ENCODE measurements at regions of chr1 and their contacts with region 1.

Region 1: DNA sequence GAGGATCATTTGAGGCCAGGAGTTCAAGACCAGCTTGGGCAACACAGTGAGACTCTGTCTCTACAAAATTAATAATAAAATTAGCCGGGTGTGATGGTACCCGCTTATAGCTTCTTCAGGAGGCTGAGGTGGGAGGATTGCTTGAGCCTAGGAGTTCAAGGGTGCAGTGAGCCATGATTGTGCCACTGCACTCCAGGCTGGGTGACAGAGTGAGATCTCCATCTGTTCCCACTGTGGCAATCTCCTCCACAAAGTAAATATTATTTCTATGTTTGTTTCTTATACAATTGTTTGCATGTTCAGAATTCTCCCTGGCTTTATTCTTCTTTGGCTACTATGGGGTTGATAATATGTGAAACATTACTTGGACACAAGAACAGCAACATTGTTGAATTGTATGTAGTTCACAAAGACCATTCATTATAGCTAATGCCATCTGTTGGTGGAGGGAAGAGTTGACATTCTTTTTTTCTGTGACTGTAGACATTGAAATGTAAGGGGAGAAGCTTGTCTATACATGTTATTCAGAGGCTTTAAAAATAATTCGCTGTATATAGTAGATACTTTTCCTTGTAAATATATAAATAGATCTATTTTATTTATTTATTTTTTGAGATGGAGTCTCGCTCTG is 47.8 kb upstream of the SRSF10 start:
- DNase-seq: no peak
- H3K4me3 ChIP-seq: no peak overlapping the region
- H3K27ac ChIP-seq: no peak overlapping the region
- H3K4me1 ChIP-seq: peaks cover 0 to under 1% of the 10 kb centered on the region in 2 donors
- H3K27me3 ChIP-seq: no peaks in the 10 kb centered on the region
- CTCF ChIP-seq: peak; percentile 16 to 73 (median 64)
- POLR2A ChIP-seq: no peak

Region 2: DNA sequence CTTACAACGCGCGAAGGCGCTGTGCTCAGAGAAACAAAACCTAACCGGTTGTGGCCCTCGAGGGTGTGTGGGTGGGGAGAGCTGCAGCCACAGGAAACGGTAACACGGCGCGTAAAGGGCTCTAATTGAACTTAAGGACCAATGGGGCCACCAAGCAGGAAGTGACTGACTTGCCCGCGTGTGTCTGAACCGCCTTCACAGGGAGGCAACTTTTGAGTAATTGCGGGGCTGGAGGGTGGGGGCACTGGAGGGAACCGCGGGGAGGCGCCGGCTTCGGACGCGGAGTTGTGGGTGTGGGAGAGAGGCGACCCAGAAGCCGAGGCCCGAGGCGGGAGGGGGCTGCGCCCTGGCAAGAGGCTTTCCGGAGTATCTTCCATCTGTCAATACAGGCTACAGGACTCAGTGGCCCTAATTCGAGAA is 68.9 kb before region 1 on chr1:
- intact Hi-C with region 1: loop called in 1 of 2 experiments (anchors 10 kb)
- DNase-seq: peak; percentile 76 to 94 (median 91)
- H3K4me3 ChIP-seq: peak overlapping the region in 2 of 4 donors; percentile 61 to 72
- H3K27ac ChIP-seq: peak overlapping the region; percentile 64 to 99 (median 98)
- H3K4me1 ChIP-seq: peaks cover 11 to 26% of the 10 kb centered on the region in 2 donors
- H3K27me3 ChIP-seq: no peaks in the 10 kb centered on the region
- CTCF ChIP-seq: peak in 1 of 6 experiments; percentile 46
- POLR2A ChIP-seq: no peak

Measured in adrenal gland (tissue), 19 donors.